Activated CD8-positive, alpha-beta memory T cell treated with anti-CD3 and anti-CD28 coated beads, Interleukin-2, amount 10 ng/mL, durations not matched to agents 7 days and 5 days (primary cell): ENCODE measurements at regions of chr11 and their contacts with region 1.

Region 1: GRCh38 chr11:62108017-62108750 is 15.6 kb upstream of the INCENP start:
- DNase-seq: peak; percentile 51
- ATAC-seq: no peak
- H3K4me3 Mint-ChIP-seq: no peak overlapping the region
- H3K27ac Mint-ChIP-seq: no peak overlapping the region
- H3K4me1 Mint-ChIP-seq: peaks cover 17% of the 10 kb centered on the region
- H3K27me3 Mint-ChIP-seq: peaks cover 14% of the 10 kb centered on the region

Region 2: GRCh38 chr11:61747192-61747966 is 360.8 kb before region 1 on chr11:
- CTCF ChIA-PET with region 1: interaction called, 11 read pairs
- DNase-seq: peak; percentile 65
- ATAC-seq: peak; percentile 59
- H3K4me3 Mint-ChIP-seq: no peak overlapping the region
- H3K27ac Mint-ChIP-seq: no peak overlapping the region
- H3K4me1 Mint-ChIP-seq: peaks cover 3% of the 10 kb centered on the region
- H3K27me3 Mint-ChIP-seq: peaks cover 18% of the 10 kb centered on the region

Region 3: GRCh38 chr11:61891331-61892084 is 216.7 kb before region 1 on chr11 and contains the start of gene FADS3:
- CTCF ChIA-PET with region 1: interaction called, 190 read pairs
- DNase-seq: peak; percentile 66
- ATAC-seq: peak; percentile 87
- H3K4me3 Mint-ChIP-seq: peak within 1 kb of the TSS; percentile 77
- H3K27ac Mint-ChIP-seq: no peak within 1 kb of the TSS
- H3K4me1 Mint-ChIP-seq: peaks cover 3% of the 10 kb centered on the region
- H3K27me3 Mint-ChIP-seq: peaks cover 9% of the 10 kb centered on the region
- total RNA-seq, gene FADS3: 2.6 to 7.7 TPM

Region 4: GRCh38 chr11:61947486-61948210 is 160.5 kb before region 1 on chr11:
- CTCF ChIA-PET with region 1: interaction called, 33 read pairs
- DNase-seq: peak; percentile 77
- ATAC-seq: peak; percentile 84
- H3K4me3 Mint-ChIP-seq: no peak overlapping the region
- H3K27ac Mint-ChIP-seq: no peak overlapping the region
- H3K4me1 Mint-ChIP-seq: no peaks in the 10 kb centered on the region
- H3K27me3 Mint-ChIP-seq: peaks cover 4% of the 10 kb centered on the region

Region 5: GRCh38 chr11:62088331-62088933 is 19.8 kb before region 1 on chr11:
- CTCF ChIA-PET with region 1: interaction called, 94 read pairs
- DNase-seq: no peak
- ATAC-seq: no peak
- H3K4me3 Mint-ChIP-seq: no peak overlapping the region
- H3K27ac Mint-ChIP-seq: no peak overlapping the region
- H3K4me1 Mint-ChIP-seq: no peaks in the 10 kb centered on the region
- H3K27me3 Mint-ChIP-seq: peaks cover 2% of the 10 kb centered on the region